Naive thymus-derived CD4-positive, alpha-beta T cell (primary cell): ENCODE measurements at regions of chr2 and their contacts with region 1.

Region 1: DNA sequence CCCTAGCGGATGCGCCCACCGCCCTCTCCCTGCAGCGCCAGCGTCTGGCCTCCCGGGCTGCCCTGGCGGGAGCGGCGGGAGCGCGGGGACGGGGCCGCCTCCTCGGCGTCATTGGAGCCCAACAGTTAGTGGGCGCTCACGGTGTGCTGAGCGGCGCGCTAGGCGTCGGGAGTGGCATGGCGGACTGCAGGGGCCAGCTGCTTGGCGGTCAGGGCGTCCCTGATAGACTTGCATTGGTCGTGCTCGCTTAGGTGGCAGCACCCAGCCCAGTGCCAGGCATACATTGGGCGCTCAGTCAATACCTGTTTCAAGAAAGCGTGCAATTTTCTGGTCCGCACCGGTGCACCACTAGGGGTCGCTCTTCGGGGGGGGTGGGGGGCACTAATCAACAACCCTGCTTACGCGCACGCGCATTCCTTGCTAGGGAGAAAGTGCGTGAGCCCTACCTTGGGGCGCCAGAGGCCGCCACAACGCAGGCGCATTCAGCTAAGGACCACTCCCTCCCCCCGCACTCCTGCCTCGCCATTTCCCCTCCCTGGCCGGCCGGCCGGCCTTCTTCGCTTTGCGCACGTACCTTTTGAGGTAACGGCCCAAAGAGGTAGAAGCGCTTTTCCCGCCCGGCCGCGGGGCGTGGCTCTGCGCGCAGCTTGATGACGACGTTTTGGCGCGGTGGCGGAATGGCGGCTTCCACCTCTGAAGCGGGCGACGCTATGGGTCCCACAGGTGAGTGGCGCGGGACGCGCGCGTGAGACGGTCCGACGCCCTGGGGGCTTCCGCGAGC is 411 bp upstream of the MZT2A start:
- DNase-seq: peak; percentile 89 to 99 (median 93)
- ATAC-seq: peak; percentile 84
- H3K4me3 ChIP-seq: peak overlapping the region; percentile 67
- H3K4me3 Mint-ChIP-seq: peak overlapping the region; percentile 89 to 98 (median 94)
- H3K27ac ChIP-seq: peak overlapping the region; percentile 96
- H3K27ac Mint-ChIP-seq: peak overlapping the region; percentile 89 to 99 (median 99)
- H3K4me1 ChIP-seq: peaks cover 13 to 14% of the 10 kb centered on the region in 2 donors
- H3K4me1 Mint-ChIP-seq: peaks cover 25 to 56% (median 42%) of the 10 kb centered on the region in 7 donors
- H3K27me3 ChIP-seq: no peaks in the 10 kb centered on the region
- H3K27me3 Mint-ChIP-seq: no peaks in the 10 kb centered on the region

Region 2: DNA sequence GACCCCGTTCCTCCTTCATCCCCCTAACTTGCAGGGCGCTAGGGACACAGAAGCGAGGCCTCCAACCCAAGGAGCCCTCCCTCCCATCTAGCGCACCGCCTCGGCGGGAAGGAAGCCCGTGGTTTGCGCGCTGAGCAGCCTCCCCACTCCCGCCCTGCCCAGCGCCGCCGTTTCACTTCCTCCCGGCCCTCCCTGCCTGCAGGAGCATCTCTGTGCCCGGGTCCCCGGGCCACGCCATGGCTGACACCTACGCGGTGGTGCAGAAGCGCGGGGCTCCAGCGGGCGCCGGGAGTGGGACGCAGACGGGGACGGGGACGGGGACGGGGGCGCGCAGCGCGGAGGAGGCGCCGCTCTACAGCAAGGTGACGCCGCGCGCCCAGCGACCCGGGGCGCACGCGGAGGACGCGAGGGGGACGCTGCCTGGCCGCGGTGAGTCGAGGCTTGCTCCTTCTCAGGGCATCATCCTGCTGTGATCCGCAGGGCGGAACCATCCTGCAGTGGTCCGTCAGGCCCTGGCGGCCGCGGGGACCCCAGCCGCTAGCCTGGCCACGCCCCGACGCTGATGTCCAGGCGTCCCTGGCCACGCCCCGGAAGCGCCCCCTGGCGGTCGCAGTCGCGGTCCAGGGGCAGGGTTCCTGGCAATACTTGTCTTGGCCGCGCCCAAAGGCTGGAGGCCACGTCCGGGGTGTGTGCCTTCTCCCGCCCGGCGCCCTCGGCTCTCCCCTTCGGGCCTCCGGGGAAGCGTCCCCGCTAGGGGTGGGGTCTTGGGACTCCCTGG is 1120.4 kb before region 1 on chr2:
- CTCF ChIA-PET with region 1: no interaction called
- POLR2A ChIA-PET with region 1: no interaction called
- intact Hi-C with region 1: loop called in 1 of 2 experiments (anchors 10 kb)
- DNase-seq: peak; percentile 49 to 92 (median 71)
- ATAC-seq: peak; percentile 86
- H3K4me3 ChIP-seq: peak overlapping the region; percentile 83
- H3K4me3 Mint-ChIP-seq: peak overlapping the region; percentile 87 to 99 (median 94)
- H3K27ac ChIP-seq: peak overlapping the region; percentile 71
- H3K27ac Mint-ChIP-seq: peak overlapping the region; percentile 88 to 97 (median 95)
- H3K4me1 ChIP-seq: peaks cover 25 to 34% of the 10 kb centered on the region in 2 donors
- H3K4me1 Mint-ChIP-seq: peaks cover 47 to 69% (median 65%) of the 10 kb centered on the region in 7 donors
- H3K27me3 ChIP-seq: no peaks in the 10 kb centered on the region
- H3K27me3 Mint-ChIP-seq: no peaks in the 10 kb centered on the region

Region 3: GRCh38 chr2:131093006-131093695 is 399.5 kb before region 1 on chr2 and contains the start of gene FAM168B:
- CTCF ChIA-PET with region 1: interaction called, 4 read pairs
- POLR2A ChIA-PET with region 1: interaction called, 3 read pairs
- intact Hi-C with region 1: loop called (anchors 1 to 2 kb)
- DNase-seq: peak; percentile 82 to 96 (median 92)
- ATAC-seq: peak; percentile 92
- H3K4me3 ChIP-seq: peak within 1 kb of the TSS; percentile 81
- H3K4me3 Mint-ChIP-seq: peak within 1 kb of the TSS; percentile 82 to 98 (median 94)
- H3K27ac ChIP-seq: peak within 1 kb of the TSS; percentile 99
- H3K27ac Mint-ChIP-seq: peak within 1 kb of the TSS; percentile 88 to 97 (median 96)
- H3K4me1 ChIP-seq: peaks cover 0 to 12% of the 10 kb centered on the region in 2 donors
- H3K4me1 Mint-ChIP-seq: peaks cover 7 to 37% (median 24%) of the 10 kb centered on the region in 7 donors
- H3K27me3 ChIP-seq: no peaks in the 10 kb centered on the region
- H3K27me3 Mint-ChIP-seq: no peaks in the 10 kb centered on the region
- total RNA-seq, gene FAM168B: 50.5 to 82.9 (median 66.7) TPM

Region 4: GRCh38 chr2:131413148-131413747 is 79.4 kb before region 1 on chr2:
- CTCF ChIA-PET with region 1: interaction called, 7 read pairs
- POLR2A ChIA-PET with region 1: interaction called, 3 read pairs
- intact Hi-C with region 1: loop called (anchors 1 kb)
- DNase-seq: peak in 5 of 9 donors; percentile 36 to 48 (median 42)
- ATAC-seq: peak; percentile 75
- H3K4me3 ChIP-seq: no peak overlapping the region
- H3K4me3 Mint-ChIP-seq: no peak overlapping the region
- H3K27ac ChIP-seq: no peak overlapping the region
- H3K27ac Mint-ChIP-seq: no peak overlapping the region
- H3K4me1 ChIP-seq: no peaks in the 10 kb centered on the region
- H3K4me1 Mint-ChIP-seq: peaks cover 0 to 10% (median 0%) of the 10 kb centered on the region in 7 donors
- H3K27me3 ChIP-seq: peaks cover 0 to 3% of the 10 kb centered on the region in 2 donors
- H3K27me3 Mint-ChIP-seq: peaks cover 20 to 57% (median 44%) of the 10 kb centered on the region in 5 donors

Region 5: GRCh38 chr2:131425231-131425941 is 67.2 kb before region 1 on chr2:
- CTCF ChIA-PET with region 1: no interaction called
- POLR2A ChIA-PET with region 1: no interaction called
- intact Hi-C with region 1: no loop called
- DNase-seq: peak in 1 of 9 donors; percentile 35
- ATAC-seq: no peak
- H3K4me3 ChIP-seq: no peak overlapping the region
- H3K4me3 Mint-ChIP-seq: peak overlapping the region in 8 of 10 donors; percentile 3 to 59 (median 35)
- H3K27ac ChIP-seq: no peak overlapping the region
- H3K27ac Mint-ChIP-seq: no peak overlapping the region
- H3K4me1 ChIP-seq: no peaks in the 10 kb centered on the region
- H3K4me1 Mint-ChIP-seq: peaks cover 0 to 12% (median 9%) of the 10 kb centered on the region in 7 donors
- H3K27me3 ChIP-seq: peaks cover 3 to 5% of the 10 kb centered on the region in 2 donors
- H3K27me3 Mint-ChIP-seq: peaks cover 64 to 84% (median 68%) of the 10 kb centered on the region in 5 donors

Region 6: GRCh38 chr2:131557558-131558321 is 65.1 kb after region 1 on chr2:
- CTCF ChIA-PET with region 1: no interaction called
- POLR2A ChIA-PET with region 1: no interaction called
- intact Hi-C with region 1: no loop called
- DNase-seq: no peak
- ATAC-seq: no peak
- H3K4me3 ChIP-seq: no peak overlapping the region
- H3K4me3 Mint-ChIP-seq: no peak overlapping the region
- H3K27ac ChIP-seq: no peak overlapping the region
- H3K27ac Mint-ChIP-seq: no peak overlapping the region
- H3K4me1 ChIP-seq: no peaks in the 10 kb centered on the region
- H3K4me1 Mint-ChIP-seq: no peaks in the 10 kb centered on the region
- H3K27me3 ChIP-seq: no peaks in the 10 kb centered on the region
- H3K27me3 Mint-ChIP-seq: peaks cover 29 to 48% (median 35%) of the 10 kb centered on the region in 5 donors

Region 7: DNA sequence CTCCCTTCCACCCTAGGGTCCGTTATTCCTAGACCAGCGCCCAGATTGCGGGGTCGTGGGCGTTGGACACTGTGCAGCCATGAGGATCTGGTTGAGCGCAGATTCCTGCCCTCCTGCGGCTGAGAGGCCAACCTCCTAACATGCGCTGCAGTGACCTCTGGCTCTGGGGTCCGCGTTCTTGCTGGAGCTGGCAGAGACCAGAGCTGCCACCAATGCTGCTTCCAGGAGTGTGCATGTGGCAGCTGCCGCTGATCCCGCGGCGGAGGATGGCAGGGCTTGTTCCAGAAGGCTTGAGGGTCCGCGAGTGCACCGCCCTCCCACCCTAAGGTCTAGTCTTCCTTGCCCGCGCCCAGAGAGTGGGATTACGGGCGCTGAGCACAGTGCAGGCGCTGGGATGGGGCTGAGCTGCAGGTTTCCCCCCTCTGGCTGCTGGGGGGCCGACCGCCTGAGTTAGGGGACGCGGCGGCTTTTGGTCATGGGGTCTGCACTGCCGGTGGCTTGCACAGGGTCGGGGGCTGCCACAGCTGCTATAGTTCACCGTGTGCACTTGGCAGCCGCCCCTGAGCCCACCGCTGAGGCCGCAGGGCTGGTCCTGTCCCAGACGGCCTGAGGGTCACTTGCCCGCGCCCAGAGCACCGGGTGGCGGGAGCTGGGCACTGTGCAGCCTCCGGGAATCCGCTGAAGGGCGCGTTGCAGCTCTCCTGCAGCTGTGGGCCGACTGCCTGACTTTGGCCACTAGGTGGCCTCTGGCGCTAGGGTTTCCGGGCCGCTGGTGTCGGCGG is 181.0 kb after region 1 on chr2:
- CTCF ChIA-PET with region 1: no interaction called
- POLR2A ChIA-PET with region 1: no interaction called
- intact Hi-C with region 1: loop called in 1 of 2 experiments (anchors 1 kb)
- DNase-seq: peak in 8 of 9 donors; percentile 38 to 69 (median 47)
- ATAC-seq: peak; percentile 77
- H3K4me3 ChIP-seq: peak overlapping the region; percentile 47
- H3K4me3 Mint-ChIP-seq: peak overlapping the region; percentile 1 to 76 (median 72)
- H3K27ac ChIP-seq: no peak overlapping the region
- H3K27ac Mint-ChIP-seq: peak overlapping the region in 1 of 9 donors; percentile 67
- H3K4me1 ChIP-seq: peaks cover 2 to 6% of the 10 kb centered on the region in 2 donors
- H3K4me1 Mint-ChIP-seq: peaks cover 0 to 6% (median 4%) of the 10 kb centered on the region in 7 donors
- H3K27me3 ChIP-seq: no peaks in the 10 kb centered on the region
- H3K27me3 Mint-ChIP-seq: peaks cover 16 to 58% (median 31%) of the 10 kb centered on the region in 5 donors